Cardiac septum (tissue), 1 donor: ENCODE measurements at regions of chr1 and their contacts with region 1.

Region 1: GRCh38 chr1:33575324-33575879 is 103.0 kb downstream of the ZSCAN20 start:
- DNase-seq: no peak

Region 2: GRCh38 chr1:33349778-33350610 is 225.4 kb before region 1 on chr1:
- intact Hi-C with region 1: loop called (anchors 10 kb)
- DNase-seq: peak; percentile 94

Region 3: GRCh38 chr1:33606272-33606671 is 30.9 kb after region 1 on chr1:
- intact Hi-C with region 1: loop called (anchors 2 kb)
- DNase-seq: no peak

Region 4: GRCh38 chr1:33624991-33625870 is 49.8 kb after region 1 on chr1:
- intact Hi-C with region 1: no loop called
- DNase-seq: no peak